HEK293 (cell line): ENCODE measurements at regions of chr3 and their contacts with region 1.

Region 1: GRCh38 chr3:113287803-113288648 is 76.7 kb downstream of the BOC start:
- H3K4me3 ChIP-seq: no peak overlapping the region
- H3K27ac ChIP-seq: no peak overlapping the region
- H3K4me1 ChIP-seq: no peaks in the 10 kb centered on the region
- CTCF ChIP-seq: peak; percentile 71

Region 2: GRCh38 chr3:113051302-113051711 is 236.7 kb before region 1 on chr3:
- CTCF ChIA-PET with region 1: interaction called, 38 read pairs
- POLR2A ChIA-PET with region 1: interaction called, 3 read pairs
- H3K4me3 ChIP-seq: no peak overlapping the region
- H3K27ac ChIP-seq: no peak overlapping the region
- H3K4me1 ChIP-seq: no peaks in the 10 kb centered on the region
- CTCF ChIP-seq: peak; percentile 66; the same call in 1 of the 2 replicates

Region 3: DNA sequence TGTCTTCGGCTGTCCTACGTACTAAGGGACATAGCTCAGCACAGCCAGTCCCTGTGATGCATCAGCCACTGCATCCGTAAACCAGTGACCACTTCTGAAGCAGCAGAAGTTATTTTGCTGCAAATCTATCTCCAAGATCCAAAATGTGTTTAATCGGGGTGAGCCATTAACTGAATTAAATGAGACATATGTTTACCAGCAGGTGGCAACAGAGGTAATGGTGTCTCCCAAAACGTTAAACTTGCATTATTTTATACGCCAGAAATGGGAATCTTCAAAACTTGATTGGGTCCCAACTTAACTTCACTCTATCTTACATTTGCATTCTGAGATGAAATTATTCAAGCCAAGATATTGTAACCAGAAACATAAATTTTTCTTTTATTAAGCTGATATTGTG is 152.0 kb before region 1 on chr3:
- CTCF ChIA-PET with region 1: interaction called, 15 read pairs
- POLR2A ChIA-PET with region 1: no interaction called
- H3K4me3 ChIP-seq: no peak overlapping the region
- H3K27ac ChIP-seq: no peak overlapping the region
- H3K4me1 ChIP-seq: peaks cover 4% of the 10 kb centered on the region; the same call in 1 of the 2 replicates
- CTCF ChIP-seq: no peak